Prostate gland (tissue), 2 donors: ENCODE measurements at regions of chr11 and their contacts with region 1.

Region 1: DNA sequence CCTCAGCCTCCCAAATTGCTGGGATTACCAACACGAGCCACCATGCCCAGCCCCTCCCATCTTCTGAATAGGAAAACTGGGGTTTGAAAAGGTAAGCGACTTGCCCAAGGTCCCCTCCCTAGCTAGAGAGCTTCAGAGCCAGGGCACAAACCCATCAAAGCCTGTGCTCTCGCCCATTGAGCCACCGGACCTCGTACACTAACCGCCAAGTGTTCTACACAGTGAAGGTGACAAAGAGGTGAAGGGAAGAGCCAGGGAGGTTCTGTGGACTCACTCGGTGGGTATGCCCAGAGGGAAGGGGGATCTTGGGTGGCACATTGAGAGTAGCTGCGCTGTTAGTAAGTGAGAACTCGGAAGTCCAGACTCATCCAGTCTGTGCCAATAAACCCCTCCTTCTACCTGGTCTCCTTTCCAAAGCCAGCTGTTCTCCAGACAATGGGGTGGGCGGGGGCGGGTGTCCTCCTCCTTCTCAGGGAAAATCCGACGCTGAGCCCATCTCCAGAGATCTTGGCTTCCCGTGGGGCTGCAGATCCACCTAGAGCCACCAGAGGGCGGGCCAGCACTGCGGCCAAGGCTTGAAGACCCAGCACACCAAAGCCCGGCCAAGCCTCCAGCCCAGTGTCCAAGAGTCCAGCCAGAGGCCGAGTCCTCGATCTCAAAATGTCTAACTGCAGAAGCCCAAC is 3.2 kb upstream of the RTN4RL2 start:
- DNase-seq: peak; percentile 83
- H3K4me3 ChIP-seq: no peak overlapping the region
- H3K27ac ChIP-seq: no peak overlapping the region
- H3K4me1 ChIP-seq: peaks cover 13% of the 10 kb centered on the region
- H3K27me3 ChIP-seq: peaks cover 3% of the 10 kb centered on the region
- CTCF ChIP-seq: peak; percentile 96 to 97 (median 96)
- POLR2A ChIP-seq: no peak

Region 2: GRCh38 chr11:57345555-57346211 is 111.4 kb before region 1 on chr11:
- intact Hi-C with region 1: loop called (anchors 5 kb)
- DNase-seq: peak; percentile 77
- H3K4me3 ChIP-seq: no peak overlapping the region
- H3K27ac ChIP-seq: no peak overlapping the region
- H3K4me1 ChIP-seq: no peaks in the 10 kb centered on the region
- H3K27me3 ChIP-seq: no peaks in the 10 kb centered on the region
- CTCF ChIP-seq: peak; percentile 63 to 77 (median 66)
- POLR2A ChIP-seq: no peak

Region 3: GRCh38 chr11:57379732-57380131 is 77.4 kb before region 1 on chr11:
- intact Hi-C with region 1: no loop called
- DNase-seq: no peak
- H3K4me3 ChIP-seq: no peak overlapping the region
- H3K27ac ChIP-seq: no peak overlapping the region
- H3K4me1 ChIP-seq: no peaks in the 10 kb centered on the region
- H3K27me3 ChIP-seq: peaks cover 5% of the 10 kb centered on the region
- CTCF ChIP-seq: no peak
- POLR2A ChIP-seq: no peak

Region 4: GRCh38 chr11:57527056-57527631 is 70.0 kb after region 1 on chr11:
- intact Hi-C with region 1: loop called (anchors 2 kb)
- DNase-seq: peak; percentile 68
- H3K4me3 ChIP-seq: no peak overlapping the region
- H3K27ac ChIP-seq: no peak overlapping the region
- H3K4me1 ChIP-seq: peaks cover 5% of the 10 kb centered on the region
- H3K27me3 ChIP-seq: no peaks in the 10 kb centered on the region
- CTCF ChIP-seq: peak; percentile 76 to 93 (median 92)
- POLR2A ChIP-seq: no peak

Region 5: DNA sequence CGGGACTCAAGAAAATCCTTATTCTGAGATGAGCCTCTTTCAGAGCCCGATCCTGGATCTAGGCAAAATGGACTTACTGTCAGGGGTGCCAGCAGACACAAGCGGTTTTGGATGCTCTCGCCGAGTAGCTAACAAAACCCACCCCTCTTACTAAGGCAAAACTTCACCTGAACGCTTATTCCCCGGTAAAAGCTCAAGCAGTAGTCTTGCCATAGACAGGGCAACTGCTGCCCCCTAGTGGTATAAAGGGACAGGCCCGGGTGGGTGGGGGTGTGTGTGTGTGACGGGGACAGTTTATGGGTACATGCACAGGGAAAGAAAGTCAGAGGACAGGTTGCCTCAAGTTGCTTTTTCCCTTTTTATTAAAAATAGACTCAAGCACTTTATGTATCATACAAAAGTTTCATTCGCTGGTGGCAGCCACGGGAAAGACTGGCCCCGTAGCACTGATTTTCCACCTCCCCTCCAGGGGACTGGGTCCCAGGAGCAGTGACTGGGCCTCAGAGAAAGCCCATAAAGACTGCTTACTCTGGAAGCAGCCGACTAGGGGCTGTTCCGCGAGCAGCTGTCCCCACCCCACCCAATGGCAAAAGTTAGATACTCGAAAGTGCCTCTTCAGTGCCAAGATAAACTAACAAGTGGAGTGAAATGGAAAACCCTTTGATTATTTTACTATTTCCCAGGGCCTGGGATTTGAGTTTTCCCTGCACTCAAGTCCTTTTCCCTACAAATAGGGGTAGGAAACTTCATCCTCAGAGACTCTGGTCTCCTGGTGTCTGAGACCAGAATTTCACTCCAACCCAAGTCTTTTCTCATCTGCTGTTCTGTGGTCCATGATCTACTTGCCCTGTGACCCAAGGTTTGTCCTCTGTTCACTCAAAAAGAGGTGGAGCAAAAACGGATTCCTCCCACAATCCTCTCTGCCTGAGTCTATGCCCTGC is 187.9 kb after region 1 on chr11:
- intact Hi-C with region 1: loop called (anchors 10 kb)
- DNase-seq: peak; percentile 82
- H3K4me3 ChIP-seq: no peak overlapping the region
- H3K27ac ChIP-seq: peak overlapping the region; percentile 7 to 61
- H3K4me1 ChIP-seq: peaks cover 8% of the 10 kb centered on the region
- H3K27me3 ChIP-seq: peaks cover 5% of the 10 kb centered on the region
- CTCF ChIP-seq: peak; percentile 65 to 91 (median 74)
- POLR2A ChIP-seq: no peak